ENCODE measurements at regions of chr1 and their contacts with region 1.

Region 1: DNA sequence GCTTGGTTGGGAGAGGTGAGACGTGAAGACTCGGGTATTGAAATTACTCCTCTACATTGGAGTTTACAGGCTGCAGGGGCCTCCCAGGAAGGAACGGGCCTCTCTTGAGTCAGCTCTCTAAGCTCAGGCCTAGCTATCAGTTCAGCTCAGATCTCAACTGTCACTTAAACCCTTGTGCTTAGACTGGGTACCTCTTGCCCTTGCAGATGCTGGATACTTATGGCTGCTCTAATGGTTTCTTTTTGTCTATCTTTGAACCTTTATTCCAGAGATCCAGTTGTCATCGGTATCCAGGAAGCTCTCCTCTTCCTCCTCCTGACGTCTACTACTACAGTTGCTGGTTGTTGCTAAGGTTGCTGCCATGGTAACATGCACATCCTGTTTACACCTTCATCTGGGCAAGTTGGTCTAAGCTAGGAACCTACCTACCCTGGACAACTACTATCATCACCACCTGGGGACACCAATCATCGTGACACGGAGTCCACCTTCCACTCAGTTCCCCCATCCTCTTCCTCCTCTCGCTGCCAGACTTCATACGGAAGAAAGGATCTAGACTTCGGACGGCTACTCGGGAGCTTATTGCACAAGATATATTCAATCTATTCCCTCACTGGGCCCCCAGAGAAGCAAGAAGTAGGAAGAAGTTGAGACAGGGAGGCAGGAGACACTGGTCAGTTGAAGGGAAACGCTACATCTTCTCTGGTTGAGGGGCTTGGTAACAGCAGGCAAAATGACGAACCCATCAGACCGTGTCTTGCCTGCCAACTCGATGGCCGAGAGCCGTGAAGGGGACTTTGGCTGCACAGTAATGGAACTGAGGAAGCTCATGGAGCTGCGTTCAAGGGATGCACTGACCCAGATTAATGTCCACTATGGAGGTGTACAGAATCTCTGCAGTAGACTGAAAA is 56.1 kb downstream of the ATP2B4 start:
- DNase-seq: peak in 2 of 3 donors; percentile 7 to 15
- H3K4me3 ChIP-seq: no peak overlapping the region
- H3K4me3 Mint-ChIP-seq: no peak overlapping the region
- H3K27ac ChIP-seq: peak overlapping the region in 1 of 2 donors; percentile 59
- H3K27ac Mint-ChIP-seq: peak overlapping the region in 6 of 7 donors; percentile 31 to 85 (median 54)
- H3K4me1 ChIP-seq: no peaks in the 10 kb centered on the region
- H3K4me1 Mint-ChIP-seq: peaks cover 8% of the 10 kb centered on the region
- H3K27me3 ChIP-seq: no peaks in the 10 kb centered on the region
- H3K27me3 Mint-ChIP-seq: peaks cover 0 to 1% (median 0%) of the 10 kb centered on the region in 3 donors
- CTCF ChIP-seq: no peak

Region 2: DNA sequence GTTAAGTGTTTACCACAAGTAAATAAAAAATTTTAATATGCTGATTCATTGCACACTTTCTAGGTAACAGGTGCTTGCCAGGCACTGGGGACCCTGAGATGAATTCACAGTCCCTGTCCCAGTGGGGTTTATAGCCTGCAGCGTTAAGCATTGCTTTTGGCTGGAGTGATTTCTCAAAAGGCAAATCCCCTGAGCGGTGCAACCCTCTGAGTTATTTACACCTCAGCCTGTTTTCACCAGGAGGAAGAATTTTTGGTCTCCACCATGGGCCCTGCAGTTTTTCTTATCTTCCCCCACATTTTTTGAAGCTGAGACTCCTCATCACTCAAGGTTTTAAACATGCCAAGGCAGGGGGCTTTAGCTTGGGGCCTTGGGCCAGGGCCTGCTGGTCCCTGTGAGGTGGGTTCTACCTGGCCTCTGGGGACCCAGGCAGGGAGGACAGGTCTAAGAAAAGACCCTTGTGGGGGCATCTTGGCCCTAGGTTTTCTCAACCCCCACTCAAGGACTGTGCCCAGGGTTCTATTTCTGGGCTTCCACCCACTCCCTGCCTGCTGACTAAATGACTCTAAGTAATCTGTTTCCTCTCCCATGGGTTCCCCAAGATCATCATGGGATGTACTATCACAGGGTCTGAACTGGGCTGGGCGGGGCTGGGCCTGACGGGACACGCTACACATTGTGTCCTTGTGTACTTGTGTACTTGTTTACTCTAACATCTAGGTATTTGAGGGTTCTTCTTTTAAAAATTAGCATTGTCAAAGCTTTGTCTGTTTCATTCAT is 443.0 kb before region 1 on chr1:
- intact Hi-C with region 1: loop called in 1 of 2 experiments (anchors 10 kb)
- DNase-seq: no peak
- H3K4me3 ChIP-seq: no peak overlapping the region
- H3K4me3 Mint-ChIP-seq: no peak overlapping the region
- H3K27ac ChIP-seq: no peak overlapping the region
- H3K27ac Mint-ChIP-seq: no peak overlapping the region
- H3K4me1 ChIP-seq: no peaks in the 10 kb centered on the region
- H3K4me1 Mint-ChIP-seq: no peaks in the 10 kb centered on the region
- H3K27me3 ChIP-seq: peaks cover 0 to 3% of the 10 kb centered on the region in 2 donors
- H3K27me3 Mint-ChIP-seq: peaks cover 15 to 31% (median 16%) of the 10 kb centered on the region in 3 donors
- CTCF ChIP-seq: no peak